ENCODE measurements at regions of chr18 and their contacts with region 1.

Region 1: GRCh38 chr18:4270016-4270415 is 185.1 kb downstream of the DLGAP1 start:
- DNase-seq: peak; percentile 60
- ATAC-seq: peak; percentile 87
- H3K4me3 ChIP-seq: no peak overlapping the region
- H3K27ac ChIP-seq: no peak overlapping the region
- H3K4me1 ChIP-seq: no peaks in the 10 kb centered on the region
- H3K27me3 ChIP-seq: no peaks in the 10 kb centered on the region
- CTCF ChIP-seq: no peak
- EP300 ChIP-seq: peak in 1 of 2 experiments; percentile 54; a peak in 2 of 4 replicates
- POLR2A ChIP-seq: no peak
- RAD21 ChIP-seq: no peak

Region 2: GRCh38 chr18:4181882-4182568 is 88.0 kb before region 1 on chr18:
- CTCF ChIA-PET with region 1: no interaction called
- POLR2A ChIA-PET with region 1: interaction called, 3 read pairs
- RAD21 ChIA-PET with region 1: interaction called, 11 read pairs
- SMC1A ChIA-PET with region 1: interaction called, 19 read pairs
- in situ Hi-C with region 1: no loop called
- intact Hi-C with region 1: no loop called
- DNase-seq: no peak
- ATAC-seq: peak; percentile 84
- H3K4me3 ChIP-seq: no peak overlapping the region
- H3K27ac ChIP-seq: no peak overlapping the region
- H3K4me1 ChIP-seq: no peaks in the 10 kb centered on the region
- H3K27me3 ChIP-seq: no peaks in the 10 kb centered on the region
- CTCF ChIP-seq: peak in 1 of 3 experiments; percentile 35; a peak in 2 of 6 replicates
- EP300 ChIP-seq: no peak
- POLR2A ChIP-seq: no peak
- RAD21 ChIP-seq: peak; percentile 38

Region 3: DNA sequence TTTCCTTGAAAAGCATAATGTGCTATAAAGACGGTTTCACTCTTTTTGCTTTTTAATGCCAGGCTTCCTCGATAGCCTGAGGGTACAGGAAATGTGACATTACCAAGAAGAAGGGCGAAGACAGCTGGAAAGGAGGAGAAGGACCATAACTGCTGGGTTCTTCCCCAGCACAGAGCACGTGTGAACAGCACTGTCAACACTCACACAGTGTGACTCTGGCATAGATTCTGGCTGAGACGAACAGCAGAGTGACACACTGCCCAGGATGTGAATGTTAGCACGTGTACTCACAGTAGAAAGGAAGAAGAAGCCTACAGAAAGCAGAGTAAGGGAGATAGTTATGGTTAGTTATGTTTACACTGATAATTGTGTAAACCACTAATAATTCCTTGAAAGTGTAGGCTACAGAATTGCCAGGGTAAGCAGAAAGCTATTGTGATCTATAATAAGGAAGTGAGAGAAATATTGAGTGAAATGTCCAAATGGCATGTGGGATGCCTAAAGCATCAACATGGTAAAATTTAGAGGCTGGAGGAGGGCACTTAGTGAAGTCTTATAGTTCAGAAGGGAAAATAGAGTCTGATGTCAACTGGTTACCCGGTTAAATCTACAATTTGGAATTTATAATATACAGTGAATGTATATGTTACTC is 13.1 kb before region 1 on chr18:
- CTCF ChIA-PET with region 1: interaction called, 24 read pairs
- POLR2A ChIA-PET with region 1: interaction called, 28 read pairs
- RAD21 ChIA-PET with region 1: interaction called, 101 read pairs
- SMC1A ChIA-PET with region 1: interaction called, 318 read pairs
- in situ Hi-C with region 1: no loop called
- intact Hi-C with region 1: no loop called
- DNase-seq: no peak
- ATAC-seq: peak; percentile 32
- H3K4me3 ChIP-seq: no peak overlapping the region
- H3K27ac ChIP-seq: peak overlapping the region; percentile 20; the same call in 1 of the 2 replicates
- H3K4me1 ChIP-seq: no peaks in the 10 kb centered on the region
- H3K27me3 ChIP-seq: no peaks in the 10 kb centered on the region
- CTCF ChIP-seq: no peak
- EP300 ChIP-seq: no peak
- POLR2A ChIP-seq: no peak
- RAD21 ChIP-seq: no peak

Region 4: GRCh38 chr18:4319738-4320677 is 50.0 kb after region 1 on chr18:
- CTCF ChIA-PET with region 1: interaction called, 3 read pairs
- POLR2A ChIA-PET with region 1: interaction called, 7 read pairs
- RAD21 ChIA-PET with region 1: interaction called, 20 read pairs
- SMC1A ChIA-PET with region 1: interaction called, 56 read pairs
- in situ Hi-C with region 1: loop called (anchors 5 kb)
- intact Hi-C with region 1: loop called (anchors 5 kb)
- DNase-seq: peak; percentile 64
- ATAC-seq: peak; percentile 91
- H3K4me3 ChIP-seq: no peak overlapping the region
- H3K27ac ChIP-seq: no peak overlapping the region; the same call in 1 of the 2 replicates
- H3K4me1 ChIP-seq: no peaks in the 10 kb centered on the region
- H3K27me3 ChIP-seq: no peaks in the 10 kb centered on the region
- CTCF ChIP-seq: no peak
- EP300 ChIP-seq: peak; percentile 88 to 90; a peak in 3 of 4 replicates
- POLR2A ChIP-seq: no peak
- RAD21 ChIP-seq: no peak

Region 5: DNA sequence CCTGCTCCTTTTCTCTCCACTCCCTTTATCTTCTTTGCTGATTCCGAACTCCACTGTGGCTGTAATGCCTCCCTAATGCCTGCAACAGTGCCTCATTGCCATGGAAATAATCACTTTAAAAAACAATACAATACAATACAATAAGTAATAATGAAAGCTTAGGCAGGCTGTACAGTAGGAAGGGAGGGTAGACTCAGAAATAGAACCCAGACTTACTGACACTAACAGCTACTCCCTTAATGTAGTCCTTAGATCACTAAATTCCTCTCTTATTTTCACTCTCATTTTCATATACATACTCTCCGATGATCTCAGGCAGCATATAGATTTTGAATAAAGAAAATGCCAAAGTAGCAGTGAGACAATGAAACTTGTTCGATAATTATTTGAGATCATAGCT is 114.9 kb after region 1 on chr18:
- CTCF ChIA-PET with region 1: interaction called, 3 read pairs
- POLR2A ChIA-PET with region 1: interaction called, 5 read pairs
- RAD21 ChIA-PET with region 1: interaction called, 12 read pairs
- SMC1A ChIA-PET with region 1: interaction called, 18 read pairs
- in situ Hi-C with region 1: no loop called
- intact Hi-C with region 1: loop called (anchors 5 kb)
- DNase-seq: no peak
- ATAC-seq: peak; percentile 88
- H3K4me3 ChIP-seq: no peak overlapping the region
- H3K27ac ChIP-seq: no peak overlapping the region
- H3K4me1 ChIP-seq: no peaks in the 10 kb centered on the region
- H3K27me3 ChIP-seq: no peaks in the 10 kb centered on the region
- CTCF ChIP-seq: no peak
- EP300 ChIP-seq: peak; percentile 40; a peak in 2 of 4 replicates
- POLR2A ChIP-seq: no peak
- RAD21 ChIP-seq: no peak

Region 6: DNA sequence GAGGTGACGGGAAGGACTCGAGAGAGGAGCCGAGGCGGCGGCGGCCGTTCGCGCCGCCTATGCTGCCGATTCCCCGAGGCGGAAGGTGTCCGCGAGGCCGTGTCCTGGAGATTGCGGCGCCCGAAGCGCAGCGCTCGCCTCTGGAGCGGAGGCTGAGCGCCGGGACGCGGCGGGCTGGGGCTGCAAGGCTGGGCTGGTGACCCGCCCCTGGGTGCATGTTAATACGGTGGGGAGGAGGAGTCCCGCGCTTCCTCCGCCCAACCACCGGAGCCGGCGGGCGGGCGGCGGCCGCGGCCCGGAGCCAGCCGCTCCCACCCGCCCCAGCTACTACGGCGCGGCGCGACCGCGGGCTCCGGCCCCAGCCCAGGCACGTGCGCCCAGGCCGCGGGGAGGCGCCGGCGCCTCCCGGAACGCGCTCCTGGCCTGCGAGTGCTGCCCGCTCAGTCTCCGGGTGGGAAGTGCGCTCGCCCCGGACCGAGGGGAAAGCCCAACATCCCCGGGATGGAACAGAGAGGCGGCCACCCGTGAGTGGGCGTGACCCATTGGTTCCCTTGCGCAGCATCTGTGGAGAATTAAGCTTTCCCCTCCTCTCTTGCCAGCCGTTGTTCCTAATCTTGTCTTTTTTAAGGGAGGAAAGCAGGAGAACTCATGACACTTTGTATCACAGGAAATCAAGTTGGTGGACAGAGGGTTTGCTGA is 185.2 kb after region 1 on chr18 and contains the start of gene DLGAP1:
- CTCF ChIA-PET with region 1: no interaction called
- POLR2A ChIA-PET with region 1: interaction called, 4 read pairs
- RAD21 ChIA-PET with region 1: interaction called, 12 read pairs
- SMC1A ChIA-PET with region 1: interaction called, 30 read pairs
- in situ Hi-C with region 1: no loop called
- intact Hi-C with region 1: loop called (anchors 5 kb)
- DNase-seq: no peak
- ATAC-seq: peak; percentile 85
- H3K4me3 ChIP-seq: no peak within 1 kb of the TSS
- H3K27ac ChIP-seq: no peak within 1 kb of the TSS
- H3K4me1 ChIP-seq: no peaks in the 10 kb centered on the region
- H3K27me3 ChIP-seq: no peaks in the 10 kb centered on the region; a peak in 1 of 4 replicates
- CTCF ChIP-seq: peak in 1 of 3 experiments; percentile 23; a peak in 1 of 6 replicates
- EP300 ChIP-seq: no peak
- POLR2A ChIP-seq: 0 out of 2 replicates have a peak, but pooled peaks have one; percentile 23
- RAD21 ChIP-seq: no peak
- polyA plus RNA-seq, gene DLGAP1: 0.23 to 0.60 TPM

Measured in GM12878 (cell line).